Right lobe of liver (tissue), 6 donors: ENCODE measurements at regions of chr15 and their contacts with region 1.

Region 1: DNA sequence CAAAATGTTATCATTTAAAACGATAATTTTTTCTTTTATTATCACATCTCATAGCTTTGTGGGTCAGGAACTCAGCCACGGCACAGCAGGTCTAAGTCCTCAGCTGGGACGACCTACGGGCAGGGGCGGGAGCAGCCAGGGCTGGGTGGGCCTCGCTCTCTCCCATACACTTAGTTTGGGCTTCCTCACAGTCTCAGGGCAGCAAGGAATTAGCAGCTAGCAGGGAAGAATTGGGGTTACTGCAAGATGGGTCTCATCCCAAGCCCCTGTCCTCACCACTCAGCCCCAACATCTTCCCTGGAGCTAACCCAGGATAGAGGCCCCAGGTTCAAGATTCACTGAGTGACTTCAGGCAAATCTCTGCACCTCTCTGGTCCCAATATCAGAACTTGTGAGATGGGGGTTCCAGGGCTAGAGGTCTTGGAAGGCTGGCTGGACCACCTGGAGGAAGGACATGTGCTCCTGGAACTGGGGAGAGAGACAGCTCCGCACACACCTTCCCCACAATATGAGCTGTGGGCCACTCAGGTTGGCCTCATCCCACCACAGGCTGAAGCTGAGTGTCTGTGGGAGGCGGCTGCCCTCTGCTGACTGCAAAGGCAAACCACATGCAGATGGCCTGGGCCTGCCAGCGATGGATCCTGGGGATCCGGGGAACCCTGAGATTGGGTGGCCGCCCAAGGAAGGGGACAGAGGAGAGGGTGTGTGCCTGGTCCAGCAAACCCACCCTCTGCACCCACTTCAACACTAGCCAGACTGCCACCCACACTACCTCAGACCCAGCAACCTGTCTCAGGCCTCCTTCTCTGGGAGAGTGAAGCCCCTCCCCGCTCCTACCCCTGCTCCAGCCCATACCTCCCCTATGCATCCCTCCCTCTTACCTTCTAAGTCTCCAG is 45.0 kb downstream of the CYP11A1 start:
- DNase-seq: peak; percentile 59 to 71 (median 66)
- ATAC-seq: peak; percentile 75 to 89 (median 85)
- H3K4me3 ChIP-seq: no peak overlapping the region
- H3K27ac ChIP-seq: no peak overlapping the region
- H3K4me1 ChIP-seq: no peaks in the 10 kb centered on the region
- H3K27me3 ChIP-seq: no peaks in the 10 kb centered on the region
- CTCF ChIP-seq: peak; percentile 66 to 81 (median 77)
- POLR2A ChIP-seq: no peak

Region 2: DNA sequence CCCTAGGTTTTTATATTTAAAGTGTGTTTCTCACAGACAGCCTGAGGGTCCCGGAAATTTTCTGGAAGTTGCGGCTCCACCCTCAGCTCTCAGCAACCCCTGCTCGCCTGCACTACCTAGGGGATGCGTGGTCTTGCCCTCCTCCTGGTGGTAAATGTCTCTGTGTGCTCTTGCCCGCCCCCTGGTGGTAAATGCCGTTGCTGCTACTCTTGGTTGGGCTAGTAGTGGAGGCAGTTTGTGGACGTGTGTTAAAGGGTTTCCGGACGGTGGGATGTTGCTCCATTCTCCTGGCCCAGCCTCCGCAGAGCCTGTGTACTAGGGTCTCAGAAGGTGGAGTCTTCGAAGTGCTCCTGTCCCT is 357.7 kb before region 1 on chr15:
- intact Hi-C with region 1: loop called in 1 of 2 experiments (anchors 10 kb)
- DNase-seq: peak; percentile 69 to 75 (median 74)
- ATAC-seq: peak; percentile 89 to 96 (median 92)
- H3K4me3 ChIP-seq: no peak overlapping the region
- H3K27ac ChIP-seq: no peak overlapping the region
- H3K4me1 ChIP-seq: no peaks in the 10 kb centered on the region
- H3K27me3 ChIP-seq: no peaks in the 10 kb centered on the region
- CTCF ChIP-seq: peak; percentile 77 to 93 (median 92)
- POLR2A ChIP-seq: no peak

Region 3: GRCh38 chr15:74184276-74185091 is 137.9 kb before region 1 on chr15:
- intact Hi-C with region 1: no loop called
- DNase-seq: peak in 1 of 3 donors; percentile 35
- ATAC-seq: no peak
- H3K4me3 ChIP-seq: no peak overlapping the region
- H3K27ac ChIP-seq: no peak overlapping the region
- H3K4me1 ChIP-seq: no peaks in the 10 kb centered on the region
- H3K27me3 ChIP-seq: no peaks in the 10 kb centered on the region
- CTCF ChIP-seq: no peak
- POLR2A ChIP-seq: no peak

Region 4: DNA sequence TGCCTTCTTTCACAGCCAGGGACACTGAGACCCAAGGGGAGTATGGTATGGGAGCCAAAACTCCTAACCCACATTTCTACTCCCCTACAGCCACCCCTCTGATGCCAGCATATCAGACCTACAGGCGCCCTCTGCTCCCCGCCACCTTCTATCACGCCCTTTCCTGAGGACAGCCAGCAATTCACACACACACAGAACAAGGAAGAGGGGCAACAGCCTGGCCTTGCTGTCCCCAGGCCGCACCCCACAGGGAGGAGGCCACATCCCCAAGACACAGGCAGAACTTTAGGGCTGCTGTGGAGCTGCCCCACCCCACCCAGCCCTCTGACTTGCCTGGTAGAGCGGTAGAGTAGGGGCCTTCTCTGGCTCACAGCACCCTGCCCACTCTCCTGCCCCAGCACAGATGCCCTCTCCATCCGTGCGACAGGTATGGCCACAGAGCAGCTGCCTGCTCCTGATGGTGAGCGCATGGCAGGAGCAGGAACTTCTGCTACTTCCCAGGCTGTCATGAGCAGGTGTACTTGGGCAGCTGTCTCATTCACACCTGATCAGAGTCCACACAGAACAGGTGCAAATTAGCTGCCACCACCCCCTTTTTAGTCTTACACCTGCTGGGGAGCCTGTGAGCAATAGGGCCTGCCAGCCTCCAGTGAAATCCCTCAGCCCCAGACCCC is 52.9 kb before region 1 on chr15:
- intact Hi-C with region 1: no loop called
- DNase-seq: no peak
- ATAC-seq: no peak
- H3K4me3 ChIP-seq: no peak overlapping the region
- H3K27ac ChIP-seq: no peak overlapping the region
- H3K4me1 ChIP-seq: no peaks in the 10 kb centered on the region
- H3K27me3 ChIP-seq: no peaks in the 10 kb centered on the region
- CTCF ChIP-seq: no peak
- POLR2A ChIP-seq: no peak

Region 5: DNA sequence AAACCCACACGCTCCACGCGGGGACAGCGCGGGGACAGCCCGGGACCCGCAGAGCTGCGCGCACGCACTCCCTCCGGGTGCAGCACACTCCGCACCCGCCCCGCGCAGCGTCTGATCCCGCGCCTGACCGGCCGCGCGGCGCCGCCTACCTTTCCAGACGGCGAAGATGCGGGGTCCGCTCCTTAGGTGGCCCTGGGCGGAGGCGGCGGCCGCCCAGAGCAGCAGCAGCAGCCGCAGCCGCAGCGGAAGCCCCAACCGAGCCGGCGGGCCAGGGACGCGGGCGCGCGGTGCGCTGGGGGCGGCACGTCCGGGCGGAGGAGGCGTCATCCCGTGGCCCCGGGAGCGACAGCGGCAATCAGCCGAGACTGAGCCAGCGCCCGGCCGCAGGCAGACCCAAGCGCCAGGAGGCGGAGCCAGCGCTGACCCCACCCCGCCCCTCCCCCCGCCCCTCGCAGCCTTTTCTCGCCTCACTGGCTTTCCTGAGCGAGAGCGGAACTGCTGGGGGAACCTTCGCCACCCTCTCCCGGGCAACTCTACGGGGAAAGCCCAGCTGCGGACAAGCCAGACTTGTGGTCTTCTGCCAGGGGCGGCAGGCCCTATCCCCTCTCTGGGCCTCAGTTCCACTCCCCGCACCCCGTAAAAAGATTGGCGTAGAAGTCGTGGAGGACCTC is 111.3 kb after region 1 on chr15 and contains the start of gene SEMA7A:
- intact Hi-C with region 1: no loop called
- DNase-seq: peak; percentile 77 to 90 (median 86)
- ATAC-seq: peak; percentile 86 to 93 (median 88)
- H3K4me3 ChIP-seq: peak within 1 kb of the TSS; percentile 60 to 79 (median 74)
- H3K27ac ChIP-seq: peak within 1 kb of the TSS in 1 of 3 donors; percentile 16
- H3K4me1 ChIP-seq: peaks cover 0 to 11% (median 0%) of the 10 kb centered on the region in 4 donors
- H3K27me3 ChIP-seq: peaks cover 0 to 5% of the 10 kb centered on the region in 2 donors
- CTCF ChIP-seq: no peak
- POLR2A ChIP-seq: peak; percentile 89
- total RNA-seq, gene SEMA7A: 0.42 to 2.4 (median 1.1) TPM